Natural killer cell (primary cell): ENCODE measurements at regions of chr1 and their contacts with region 1.

Region 1: GRCh38 chr1:225999227-225999911 is at the start of gene SDE2:
- DNase-seq: peak; percentile 99
- ATAC-seq: peak; percentile 83 to 97 (median 87)
- H3K4me3 ChIP-seq: peak within 1 kb of the TSS; percentile 81
- H3K4me3 Mint-ChIP-seq: peak within 1 kb of the TSS; percentile 100
- H3K27ac ChIP-seq: peak within 1 kb of the TSS; percentile 99
- H3K27ac Mint-ChIP-seq: peak within 1 kb of the TSS; percentile 96 to 100
- H3K4me1 ChIP-seq: peaks cover 48% of the 10 kb centered on the region
- H3K4me1 Mint-ChIP-seq: peaks cover 63 to 64% of the 10 kb centered on the region in 2 donors
- H3K27me3 ChIP-seq: no peaks in the 10 kb centered on the region
- H3K27me3 Mint-ChIP-seq: no peaks in the 10 kb centered on the region
- CTCF ChIP-seq: no peak
- total RNA-seq, gene SDE2: 52.5 to 62.7 (median 53.6) TPM

Region 2: DNA sequence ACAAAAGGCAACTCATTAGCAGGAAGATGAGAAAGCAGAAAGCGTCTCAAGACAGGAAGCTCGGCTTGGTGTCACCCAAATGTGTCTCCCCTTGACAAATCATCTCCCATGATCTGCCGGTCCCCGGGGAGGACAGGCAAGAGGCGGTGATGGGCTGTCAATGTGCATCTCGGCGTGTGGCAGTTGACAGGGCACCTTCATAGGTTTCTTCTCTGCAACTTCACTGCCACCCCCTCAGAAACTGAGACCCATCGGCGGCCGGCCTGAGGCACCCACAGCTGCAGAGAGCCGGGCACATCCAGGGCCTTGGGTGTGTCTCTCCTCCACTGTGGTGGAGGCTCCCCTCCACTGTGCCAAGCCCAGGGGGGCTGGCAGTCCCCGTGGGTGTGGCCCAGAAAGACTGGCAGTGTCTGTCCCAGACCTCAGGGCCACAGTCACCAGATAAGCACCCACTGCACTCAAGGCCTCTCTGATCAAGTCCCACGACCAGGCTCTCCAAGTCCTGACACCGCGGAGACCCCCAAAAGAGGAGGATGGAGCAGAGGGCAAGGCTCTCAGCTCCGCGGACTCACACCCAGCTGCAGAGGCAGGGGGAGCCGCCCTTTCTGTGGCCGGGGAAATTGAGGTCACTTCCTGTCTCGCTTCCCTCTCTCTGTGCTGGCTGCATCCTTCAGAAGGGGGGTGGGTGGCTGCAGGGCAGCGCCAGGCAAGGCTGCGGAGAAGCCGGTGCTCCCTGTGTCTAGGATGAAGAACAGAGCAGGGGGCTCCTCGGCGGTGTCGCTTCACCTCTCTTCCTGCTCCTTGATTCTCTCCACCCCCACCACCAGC is 532.0 kb before region 1 on chr1:
- intact Hi-C with region 1: loop called (anchors 5 kb)
- DNase-seq: peak; percentile 70 to 91
- ATAC-seq: peak; percentile 84 to 92 (median 88)
- H3K4me3 ChIP-seq: peak overlapping the region; percentile 55
- H3K4me3 Mint-ChIP-seq: peak overlapping the region; percentile 94
- H3K27ac ChIP-seq: peak overlapping the region; percentile 97
- H3K27ac Mint-ChIP-seq: peak overlapping the region; percentile 96
- H3K4me1 ChIP-seq: peaks cover 59% of the 10 kb centered on the region
- H3K4me1 Mint-ChIP-seq: peaks cover 68 to 80% of the 10 kb centered on the region in 2 donors
- H3K27me3 ChIP-seq: no peaks in the 10 kb centered on the region
- H3K27me3 Mint-ChIP-seq: no peaks in the 10 kb centered on the region
- CTCF ChIP-seq: no peak

Region 3: DNA sequence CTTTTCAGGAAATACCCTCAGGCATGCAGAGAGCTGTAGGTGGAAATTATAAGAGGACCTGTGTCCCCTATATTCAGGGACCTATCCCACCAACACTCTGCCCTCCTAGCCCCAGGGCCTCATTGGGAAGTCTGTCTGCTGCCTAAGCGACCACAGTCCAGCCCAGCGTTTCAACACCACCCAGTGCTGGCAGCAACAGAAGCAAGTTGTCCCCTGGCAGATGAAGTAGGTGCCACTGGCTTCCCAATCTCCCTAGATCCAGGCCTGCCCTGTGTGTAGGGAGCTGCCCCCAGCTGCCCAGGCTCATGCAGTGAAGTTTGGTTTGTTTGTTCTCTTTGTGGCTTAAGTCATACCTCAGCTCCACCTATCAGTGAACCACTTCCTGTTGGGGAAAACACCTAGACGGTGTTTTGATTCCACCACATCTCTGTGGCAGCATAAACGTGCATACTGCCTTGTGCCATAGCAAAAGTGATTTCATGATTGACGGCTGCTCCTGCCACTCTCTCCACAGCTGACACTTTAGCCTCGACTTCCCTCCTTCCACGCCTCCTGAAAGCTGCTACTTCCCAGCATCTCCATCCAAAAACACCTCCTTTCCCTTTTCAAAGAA is 102.3 kb before region 1 on chr1:
- intact Hi-C with region 1: loop called (anchors 5 kb)
- DNase-seq: peak; percentile 48 to 94
- ATAC-seq: peak; percentile 95 to 99 (median 97)
- H3K4me3 ChIP-seq: no peak overlapping the region
- H3K4me3 Mint-ChIP-seq: peak overlapping the region; percentile 75
- H3K27ac ChIP-seq: peak overlapping the region; percentile 81
- H3K27ac Mint-ChIP-seq: peak overlapping the region; percentile 84 to 87
- H3K4me1 ChIP-seq: peaks cover 34% of the 10 kb centered on the region
- H3K4me1 Mint-ChIP-seq: peaks cover 22 to 25% of the 10 kb centered on the region in 2 donors
- H3K27me3 ChIP-seq: no peaks in the 10 kb centered on the region
- H3K27me3 Mint-ChIP-seq: peaks cover 0 to 6% of the 10 kb centered on the region in 2 donors
- CTCF ChIP-seq: no peak

Region 4: GRCh38 chr1:225923692-225924555 is 75.4 kb before region 1 on chr1 and contains the start of gene PYCR2:
- intact Hi-C with region 1: loop called (anchors 1 kb)
- DNase-seq: peak; percentile 98
- ATAC-seq: peak; percentile 96 to 99 (median 97)
- H3K4me3 ChIP-seq: peak within 1 kb of the TSS; percentile 89
- H3K4me3 Mint-ChIP-seq: peak within 1 kb of the TSS; percentile 89
- H3K27ac ChIP-seq: peak within 1 kb of the TSS; percentile 90
- H3K27ac Mint-ChIP-seq: peak within 1 kb of the TSS; percentile 87 to 97
- H3K4me1 ChIP-seq: peaks cover 32% of the 10 kb centered on the region
- H3K4me1 Mint-ChIP-seq: peaks cover 19 to 37% of the 10 kb centered on the region in 2 donors
- H3K27me3 ChIP-seq: no peaks in the 10 kb centered on the region
- H3K27me3 Mint-ChIP-seq: no peaks in the 10 kb centered on the region
- CTCF ChIP-seq: no peak
- total RNA-seq, gene PYCR2: 57.7 to 74.5 (median 62.6) TPM

Region 5: GRCh38 chr1:225950905-225951497 is 48.4 kb before region 1 on chr1:
- intact Hi-C with region 1: no loop called
- DNase-seq: no peak
- ATAC-seq: no peak
- H3K4me3 ChIP-seq: no peak overlapping the region
- H3K4me3 Mint-ChIP-seq: no peak overlapping the region
- H3K27ac ChIP-seq: no peak overlapping the region
- H3K27ac Mint-ChIP-seq: no peak overlapping the region
- H3K4me1 ChIP-seq: no peaks in the 10 kb centered on the region
- H3K4me1 Mint-ChIP-seq: peaks cover 0 to 8% of the 10 kb centered on the region in 2 donors
- H3K27me3 ChIP-seq: no peaks in the 10 kb centered on the region
- H3K27me3 Mint-ChIP-seq: peaks cover 25 to 33% of the 10 kb centered on the region in 2 donors
- CTCF ChIP-seq: no peak

Region 6: GRCh38 chr1:226062558-226063223 is 63.3 kb after region 1 on chr1 and contains the start of gene H3-3A:
- intact Hi-C with region 1: loop called (anchors 1 kb)
- DNase-seq: peak; percentile 97 to 98
- ATAC-seq: peak; percentile 81 to 96 (median 84)
- H3K4me3 ChIP-seq: peak within 1 kb of the TSS; percentile 63
- H3K4me3 Mint-ChIP-seq: peak within 1 kb of the TSS; percentile 100
- H3K27ac ChIP-seq: peak within 1 kb of the TSS; percentile 96
- H3K27ac Mint-ChIP-seq: peak within 1 kb of the TSS; percentile 99
- H3K4me1 ChIP-seq: peaks cover 18% of the 10 kb centered on the region
- H3K4me1 Mint-ChIP-seq: peaks cover 50% of the 10 kb centered on the region in 2 donors
- H3K27me3 ChIP-seq: no peaks in the 10 kb centered on the region
- H3K27me3 Mint-ChIP-seq: no peaks in the 10 kb centered on the region
- CTCF ChIP-seq: no peak
- total RNA-seq, gene H3-3A: 490 to 616 (median 522) TPM

Region 7: GRCh38 chr1:226092965-226093364 is 93.6 kb after region 1 on chr1:
- intact Hi-C with region 1: no loop called
- DNase-seq: no peak
- ATAC-seq: no peak
- H3K4me3 ChIP-seq: no peak overlapping the region
- H3K4me3 Mint-ChIP-seq: no peak overlapping the region
- H3K27ac ChIP-seq: no peak overlapping the region
- H3K27ac Mint-ChIP-seq: no peak overlapping the region
- H3K4me1 ChIP-seq: no peaks in the 10 kb centered on the region
- H3K4me1 Mint-ChIP-seq: no peaks in the 10 kb centered on the region
- H3K27me3 ChIP-seq: no peaks in the 10 kb centered on the region
- H3K27me3 Mint-ChIP-seq: peaks cover 7 to 9% of the 10 kb centered on the region in 2 donors
- CTCF ChIP-seq: no peak

Region 8: DNA sequence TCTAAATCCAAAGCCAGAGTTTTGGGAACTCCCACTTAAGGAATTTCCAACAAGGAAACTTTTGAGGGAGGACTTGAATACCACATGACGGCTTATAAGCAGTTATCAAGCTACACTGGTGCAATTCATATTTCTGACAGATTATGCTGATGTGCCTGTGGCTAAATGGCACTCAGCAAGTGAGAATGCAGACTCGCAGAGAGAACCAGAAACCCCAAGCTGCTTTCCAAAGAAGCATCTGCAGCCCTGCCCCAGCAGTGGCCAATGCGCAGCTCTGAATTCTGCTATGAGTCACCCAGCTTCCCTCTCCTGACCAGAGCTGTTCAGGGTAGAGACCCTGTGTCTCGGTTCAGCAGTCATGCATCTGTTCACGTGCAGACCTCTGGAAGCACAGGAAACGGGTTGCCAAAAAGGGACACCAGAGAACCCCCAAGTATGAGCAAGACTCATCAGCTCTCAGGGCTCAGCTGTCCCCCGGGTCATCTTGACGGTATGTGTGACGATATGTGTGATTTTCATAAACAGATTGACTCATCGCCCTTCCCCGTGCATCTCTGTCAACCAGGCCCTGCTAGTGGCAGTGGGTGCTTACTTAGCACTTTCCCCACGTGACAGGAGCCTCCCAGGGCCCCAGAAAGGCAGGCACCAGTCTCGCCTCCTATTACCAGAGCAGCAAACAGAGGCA is 663.4 kb after region 1 on chr1:
- intact Hi-C with region 1: loop called (anchors 10 kb)
- DNase-seq: peak; percentile 80 to 96
- ATAC-seq: peak; percentile 81 to 94 (median 88)
- H3K4me3 ChIP-seq: no peak overlapping the region
- H3K4me3 Mint-ChIP-seq: peak overlapping the region; percentile 84
- H3K27ac ChIP-seq: peak overlapping the region; percentile 88
- H3K27ac Mint-ChIP-seq: peak overlapping the region in 1 of 2 donors; percentile 100
- H3K4me1 ChIP-seq: peaks cover 92% of the 10 kb centered on the region
- H3K4me1 Mint-ChIP-seq: peaks cover 81 to 88% of the 10 kb centered on the region in 2 donors
- H3K27me3 ChIP-seq: no peaks in the 10 kb centered on the region
- H3K27me3 Mint-ChIP-seq: no peaks in the 10 kb centered on the region
- CTCF ChIP-seq: no peak